A673 (cell line): ENCODE measurements at regions of chr1 and their contacts with region 1.

Region 1: GRCh38 chr1:91929250-91929649 is 20.0 kb upstream of the BRDT start:
- DNase-seq: no peak
- H3K4me3 ChIP-seq: no peak overlapping the region
- H3K27ac ChIP-seq: no peak overlapping the region
- H3K4me1 ChIP-seq: peaks cover 3% of the 10 kb centered on the region
- H3K27me3 ChIP-seq: no peaks in the 10 kb centered on the region
- CTCF ChIP-seq: no peak

Region 2: DNA sequence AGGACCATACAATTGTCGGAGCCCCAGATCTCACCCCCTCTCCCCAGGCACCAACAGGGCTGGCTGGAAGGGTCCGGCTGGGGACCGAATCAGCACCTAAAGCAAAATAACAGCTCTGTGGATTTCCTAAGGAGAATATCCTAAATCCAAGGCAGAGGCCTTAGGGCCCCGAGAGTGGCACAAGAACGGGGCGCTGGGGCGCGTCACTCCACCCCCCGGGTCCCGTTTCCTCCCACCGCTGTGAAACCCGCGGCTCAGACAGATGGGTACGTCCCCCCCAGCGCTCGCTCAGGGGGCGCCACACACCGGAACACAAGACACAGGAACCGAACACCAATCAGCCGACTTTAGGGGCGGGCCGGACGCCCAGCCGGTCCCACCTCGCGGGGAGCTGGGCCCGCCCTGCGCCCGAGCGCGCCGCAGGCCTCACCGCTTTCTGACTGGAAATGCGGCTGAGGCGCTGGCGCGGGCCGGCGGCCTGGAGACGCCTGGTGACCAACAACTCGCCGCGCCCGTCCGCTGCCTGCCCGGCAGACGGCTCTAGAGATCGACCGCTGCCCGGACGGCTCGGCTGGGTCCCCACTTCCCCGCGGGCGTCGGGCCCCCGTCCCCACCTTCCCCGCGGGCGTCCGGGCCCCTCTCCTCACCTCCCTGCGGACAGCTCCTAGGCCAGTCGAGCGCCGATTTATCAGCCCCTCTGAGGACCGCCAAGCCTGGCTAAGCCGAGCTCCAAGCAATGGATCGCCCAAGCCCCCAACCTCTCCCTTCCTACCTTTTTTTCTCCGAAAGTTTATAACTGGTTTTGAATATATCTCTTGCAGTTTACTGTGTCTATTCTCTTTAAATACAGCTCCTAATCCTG is 524.9 kb before region 1 on chr1 and contains the start of gene HFM1:
- CTCF ChIA-PET with region 1: interaction called, 3 read pairs
- POLR2A ChIA-PET with region 1: interaction called, 18 read pairs
- intact Hi-C with region 1: loop called (anchors 5 kb)
- DNase-seq: peak; percentile 88
- H3K4me3 ChIP-seq: peak within 1 kb of the TSS; percentile 60
- H3K27ac ChIP-seq: peak within 1 kb of the TSS; percentile 68
- H3K4me1 ChIP-seq: peaks cover 10% of the 10 kb centered on the region
- H3K27me3 ChIP-seq: no peaks in the 10 kb centered on the region
- CTCF ChIP-seq: no peak
- total RNA-seq, gene HFM1: 0.69 and 1.3 TPM in 2 replicates

Region 3: DNA sequence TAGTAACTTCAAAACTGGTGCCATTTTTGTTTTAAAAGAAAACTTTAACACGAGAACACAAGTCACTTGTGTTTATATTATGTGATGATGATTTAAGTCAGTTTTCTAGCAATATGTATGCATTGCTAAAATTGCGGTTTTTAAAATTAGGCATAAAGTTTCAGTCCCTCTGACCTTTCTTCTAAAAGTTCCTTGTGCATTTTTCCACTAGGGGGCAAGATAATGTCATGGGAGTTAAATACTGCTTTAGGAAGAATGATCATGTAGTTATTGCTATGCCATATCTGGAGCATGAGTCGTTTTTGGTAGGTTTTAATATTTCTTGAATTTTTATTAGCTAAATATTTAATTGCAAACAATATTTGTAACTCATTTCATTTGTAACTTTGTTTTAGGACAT is 417.9 kb before region 1 on chr1:
- CTCF ChIA-PET with region 1: interaction called, 6 read pairs
- POLR2A ChIA-PET with region 1: no interaction called
- intact Hi-C with region 1: loop called (anchors 1 kb)
- DNase-seq: peak; percentile 66
- H3K4me3 ChIP-seq: no peak overlapping the region
- H3K27ac ChIP-seq: no peak overlapping the region
- H3K4me1 ChIP-seq: peaks cover 21% of the 10 kb centered on the region
- H3K27me3 ChIP-seq: no peaks in the 10 kb centered on the region
- CTCF ChIP-seq: peak; percentile 71

Region 4: GRCh38 chr1:91529856-91530255 is 399.4 kb before region 1 on chr1:
- CTCF ChIA-PET with region 1: interaction called, 5 read pairs
- POLR2A ChIA-PET with region 1: no interaction called
- intact Hi-C with region 1: loop called (anchors 5 kb)
- DNase-seq: peak; percentile 15
- H3K4me3 ChIP-seq: no peak overlapping the region
- H3K27ac ChIP-seq: no peak overlapping the region
- H3K4me1 ChIP-seq: no peaks in the 10 kb centered on the region
- H3K27me3 ChIP-seq: no peaks in the 10 kb centered on the region
- CTCF ChIP-seq: peak; percentile 35

Region 5: DNA sequence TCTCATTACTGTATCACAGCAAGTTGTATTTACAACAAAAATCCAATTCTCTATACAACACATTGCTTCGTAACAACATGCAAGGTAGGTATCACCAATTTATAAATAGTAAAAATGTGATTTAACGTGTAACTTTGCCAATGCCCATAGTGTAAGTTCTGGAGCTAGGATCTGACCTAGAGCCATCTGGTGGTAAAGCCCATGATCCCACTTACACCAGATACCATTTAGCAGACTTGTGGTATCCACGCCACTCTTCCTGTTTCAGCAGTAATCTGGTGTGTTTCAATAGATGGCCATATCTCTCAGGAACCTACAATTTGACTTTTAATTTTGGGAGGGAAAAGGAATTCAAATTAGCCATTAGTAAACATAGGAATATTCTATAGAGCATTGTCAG is 135.8 kb after region 1 on chr1:
- CTCF ChIA-PET with region 1: no interaction called
- POLR2A ChIA-PET with region 1: no interaction called
- intact Hi-C with region 1: no loop called
- DNase-seq: no peak
- H3K4me3 ChIP-seq: no peak overlapping the region
- H3K27ac ChIP-seq: no peak overlapping the region
- H3K4me1 ChIP-seq: no peaks in the 10 kb centered on the region
- H3K27me3 ChIP-seq: no peaks in the 10 kb centered on the region
- CTCF ChIP-seq: peak; percentile 19; the same call in 1 of the 2 replicates

Region 6: GRCh38 chr1:92291372-92291999 is 362.2 kb after region 1 on chr1:
- CTCF ChIA-PET with region 1: interaction called, 3 read pairs
- POLR2A ChIA-PET with region 1: no interaction called
- intact Hi-C with region 1: loop called (anchors 2 kb)
- DNase-seq: peak; percentile 72
- H3K4me3 ChIP-seq: no peak overlapping the region
- H3K27ac ChIP-seq: no peak overlapping the region
- H3K4me1 ChIP-seq: no peaks in the 10 kb centered on the region
- H3K27me3 ChIP-seq: no peaks in the 10 kb centered on the region
- CTCF ChIP-seq: peak; percentile 89